Caco-2 (cell line): ENCODE measurements at regions of chr6 and their contacts with region 1.

Region 1: DNA sequence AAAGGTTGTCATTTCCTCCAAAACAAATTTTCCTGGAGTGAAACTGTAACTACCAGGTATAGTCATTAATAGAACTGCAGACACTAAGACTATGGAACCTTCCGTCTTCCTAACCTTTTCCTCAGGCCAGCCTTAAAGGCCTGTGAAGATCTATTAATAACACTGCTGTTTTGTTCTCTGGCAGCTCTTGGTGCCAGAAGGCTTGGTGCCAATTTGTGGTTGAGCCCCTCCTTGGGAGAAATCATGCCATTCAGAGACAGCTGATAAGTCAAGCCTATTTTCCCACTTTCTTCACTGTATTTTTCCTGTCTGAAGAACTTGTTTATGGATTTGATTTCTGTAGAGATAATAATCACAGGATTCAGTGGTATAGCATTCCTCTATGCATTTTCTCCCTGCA is 64.8 kb downstream of the HCRTR2 start:
- DNase-seq: no peak
- H3K4me3 ChIP-seq: no peak overlapping the region
- H3K4me3 Mint-ChIP-seq: no peak overlapping the region
- H3K27ac Mint-ChIP-seq: no peak overlapping the region
- H3K4me1 ChIP-seq: no peaks in the 10 kb centered on the region
- H3K4me1 Mint-ChIP-seq: peaks cover 5% of the 10 kb centered on the region
- H3K27me3 ChIP-seq: no peaks in the 10 kb centered on the region
- H3K27me3 Mint-ChIP-seq: no peaks in the 10 kb centered on the region
- CTCF ChIP-seq: no peak

Region 2: DNA sequence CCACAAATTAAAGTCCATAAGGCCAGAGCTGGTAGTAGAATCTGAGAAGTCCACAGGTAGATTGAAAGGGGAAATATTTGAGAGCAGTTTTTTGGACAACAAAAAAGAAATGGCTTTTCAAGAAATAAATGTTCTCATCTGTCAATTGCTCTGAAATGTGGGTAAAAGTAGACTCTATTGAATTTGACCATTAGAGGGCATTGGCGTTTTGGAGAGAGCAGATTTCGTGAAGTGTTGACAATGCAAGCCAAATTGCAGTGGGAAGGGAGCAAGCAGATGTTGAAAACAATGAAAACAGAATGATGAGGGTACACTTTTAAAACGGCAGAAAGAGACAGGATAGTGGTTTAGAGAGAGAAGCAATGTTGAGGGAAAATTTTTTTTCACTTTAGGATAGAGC is 541.7 kb before region 1 on chr6:
- CTCF ChIA-PET with region 1: no interaction called
- POLR2A ChIA-PET with region 1: no interaction called
- intact Hi-C with region 1: loop called (anchors 5 kb)
- DNase-seq: peak in 1 of 2 experiments; percentile 10
- H3K4me3 ChIP-seq: no peak overlapping the region
- H3K4me3 Mint-ChIP-seq: peak overlapping the region; percentile 10
- H3K27ac Mint-ChIP-seq: peak overlapping the region; percentile 13
- H3K4me1 ChIP-seq: peaks cover 14% of the 10 kb centered on the region
- H3K4me1 Mint-ChIP-seq: peaks cover 8% of the 10 kb centered on the region
- H3K27me3 ChIP-seq: no peaks in the 10 kb centered on the region
- H3K27me3 Mint-ChIP-seq: no peaks in the 10 kb centered on the region
- CTCF ChIP-seq: peak; percentile 31 to 34

Region 3: GRCh38 chr6:54856129-54856528 is 383.0 kb before region 1 on chr6:
- CTCF ChIA-PET with region 1: no interaction called
- POLR2A ChIA-PET with region 1: no interaction called
- intact Hi-C with region 1: loop called (anchors 5 kb)
- DNase-seq: peak in 1 of 2 experiments; percentile 8
- H3K4me3 ChIP-seq: no peak overlapping the region
- H3K4me3 Mint-ChIP-seq: no peak overlapping the region
- H3K27ac Mint-ChIP-seq: no peak overlapping the region
- H3K4me1 ChIP-seq: peaks cover 17% of the 10 kb centered on the region
- H3K4me1 Mint-ChIP-seq: peaks cover 29% of the 10 kb centered on the region
- H3K27me3 ChIP-seq: no peaks in the 10 kb centered on the region
- H3K27me3 Mint-ChIP-seq: no peaks in the 10 kb centered on the region
- CTCF ChIP-seq: no peak

Region 4: GRCh38 chr6:55198708-55199107 is 40.4 kb before region 1 on chr6:
- CTCF ChIA-PET with region 1: no interaction called
- POLR2A ChIA-PET with region 1: no interaction called
- intact Hi-C with region 1: no loop called
- DNase-seq: no peak
- H3K4me3 ChIP-seq: no peak overlapping the region
- H3K4me3 Mint-ChIP-seq: no peak overlapping the region
- H3K27ac Mint-ChIP-seq: no peak overlapping the region
- H3K4me1 ChIP-seq: no peaks in the 10 kb centered on the region
- H3K4me1 Mint-ChIP-seq: no peaks in the 10 kb centered on the region
- H3K27me3 ChIP-seq: no peaks in the 10 kb centered on the region
- H3K27me3 Mint-ChIP-seq: no peaks in the 10 kb centered on the region
- CTCF ChIP-seq: no peak